ENCODE measurements at regions of chr17 and their contacts with region 1.

Region 1: GRCh38 chr17:42312285-42313130 is 24.2 kb downstream of the STAT5A start:
- DNase-seq: peak; percentile 62 to 81 (median 74)
- ATAC-seq: peak; percentile 82
- H3K4me3 ChIP-seq: peak overlapping the region; percentile 24
- H3K4me3 Mint-ChIP-seq: peak overlapping the region; percentile 54 to 82 (median 72)
- H3K27ac ChIP-seq: peak overlapping the region; percentile 69
- H3K27ac Mint-ChIP-seq: peak overlapping the region; percentile 62 to 94 (median 85)
- H3K4me1 ChIP-seq: peaks cover 13 to 67% of the 10 kb centered on the region in 2 donors
- H3K4me1 Mint-ChIP-seq: peaks cover 49 to 94% (median 79%) of the 10 kb centered on the region in 7 donors
- H3K27me3 ChIP-seq: no peaks in the 10 kb centered on the region
- H3K27me3 Mint-ChIP-seq: no peaks in the 10 kb centered on the region

Region 2: GRCh38 chr17:41930009-41930832 is 382.3 kb before region 1 on chr17 and contains the start of gene ODAD4:
- CTCF ChIA-PET with region 1: no interaction called
- POLR2A ChIA-PET with region 1: no interaction called
- intact Hi-C with region 1: no loop called
- DNase-seq: peak; percentile 87 to 98 (median 97)
- ATAC-seq: peak; percentile 98
- H3K4me3 ChIP-seq: peak within 1 kb of the TSS; percentile 79
- H3K4me3 Mint-ChIP-seq: peak within 1 kb of the TSS; percentile 93 to 100 (median 96)
- H3K27ac ChIP-seq: peak within 1 kb of the TSS; percentile 84
- H3K27ac Mint-ChIP-seq: peak within 1 kb of the TSS; percentile 90 to 100 (median 96)
- H3K4me1 ChIP-seq: peaks cover 9 to 11% of the 10 kb centered on the region in 2 donors
- H3K4me1 Mint-ChIP-seq: peaks cover 18 to 52% (median 24%) of the 10 kb centered on the region in 7 donors
- H3K27me3 ChIP-seq: no peaks in the 10 kb centered on the region
- H3K27me3 Mint-ChIP-seq: no peaks in the 10 kb centered on the region
- total RNA-seq, gene ODAD4: 0.16 to 4.1 (median 1.6) TPM in 4 of 5 experiments, not detected in the other

Region 3: GRCh38 chr17:42248351-42249179 is 63.9 kb before region 1 on chr17:
- CTCF ChIA-PET with region 1: interaction called, 4 read pairs
- POLR2A ChIA-PET with region 1: interaction called, 38 read pairs
- intact Hi-C with region 1: loop called in 1 of 2 experiments (anchors 2 kb)
- DNase-seq: peak; percentile 47 to 95 (median 90)
- ATAC-seq: peak; percentile 93
- H3K4me3 ChIP-seq: peak overlapping the region; percentile 66
- H3K4me3 Mint-ChIP-seq: peak overlapping the region; percentile 83 to 99 (median 90)
- H3K27ac ChIP-seq: peak overlapping the region; percentile 97
- H3K27ac Mint-ChIP-seq: peak overlapping the region; percentile 97 to 99 (median 99)
- H3K4me1 ChIP-seq: peaks cover 43 to 52% of the 10 kb centered on the region in 2 donors
- H3K4me1 Mint-ChIP-seq: peaks cover 50 to 83% (median 74%) of the 10 kb centered on the region in 7 donors
- H3K27me3 ChIP-seq: no peaks in the 10 kb centered on the region
- H3K27me3 Mint-ChIP-seq: no peaks in the 10 kb centered on the region

Region 4: DNA sequence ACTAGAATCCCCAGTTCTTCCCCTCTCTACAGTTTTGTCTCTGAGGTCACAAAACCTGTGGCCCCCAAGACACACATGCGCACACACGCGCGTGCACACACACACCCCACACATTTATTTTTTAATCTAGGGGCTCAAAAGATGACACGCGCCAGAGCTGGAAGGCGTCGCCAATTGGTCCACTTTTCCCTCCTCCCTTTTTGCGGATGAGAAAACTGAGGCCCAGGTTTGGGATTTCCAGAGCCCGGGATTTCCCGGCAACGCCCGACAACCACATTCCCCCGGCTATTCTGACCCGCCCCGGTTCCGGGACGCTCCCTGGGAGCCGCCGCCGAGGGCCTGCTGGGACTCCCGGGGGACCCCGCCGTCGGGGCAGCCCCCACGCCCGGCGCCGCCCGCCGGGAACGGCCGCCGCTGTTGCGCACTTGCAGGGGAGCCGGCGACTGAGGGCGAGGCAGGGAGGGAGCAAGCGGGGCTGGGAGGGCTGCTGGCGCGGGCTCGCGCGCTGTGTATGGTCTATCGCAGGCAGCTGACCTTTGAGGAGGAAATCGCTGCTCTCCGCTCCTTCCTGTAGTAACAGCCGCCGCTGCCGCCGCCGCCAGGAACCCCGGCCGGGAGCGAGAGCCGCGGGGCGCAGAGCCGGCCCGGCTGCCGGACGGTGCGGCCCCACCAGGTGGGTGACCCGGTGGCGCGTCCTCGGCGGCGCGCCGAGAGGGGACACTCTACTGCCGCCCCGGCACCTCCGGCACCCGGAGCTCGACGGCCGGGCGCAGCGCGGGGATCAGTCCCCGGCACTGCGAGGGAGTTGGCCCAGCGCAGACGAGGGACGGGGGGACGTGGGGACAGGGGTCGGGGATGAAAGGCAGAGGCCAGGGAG is 24.3 kb before region 1 on chr17 and contains the start of gene STAT5A:
- CTCF ChIA-PET with region 1: interaction called, 3 read pairs
- POLR2A ChIA-PET with region 1: interaction called, 88 read pairs
- intact Hi-C with region 1: loop called (anchors 1 to 2 kb)
- DNase-seq: peak; percentile 58 to 83 (median 79)
- ATAC-seq: peak; percentile 90
- H3K4me3 ChIP-seq: peak within 1 kb of the TSS; percentile 88
- H3K4me3 Mint-ChIP-seq: peak within 1 kb of the TSS; percentile 87 to 97 (median 93)
- H3K27ac ChIP-seq: peak within 1 kb of the TSS; percentile 93
- H3K27ac Mint-ChIP-seq: peak within 1 kb of the TSS; percentile 93 to 99 (median 96)
- H3K4me1 ChIP-seq: peaks cover 18 to 24% of the 10 kb centered on the region in 2 donors
- H3K4me1 Mint-ChIP-seq: peaks cover 27 to 65% (median 54%) of the 10 kb centered on the region in 7 donors
- H3K27me3 ChIP-seq: no peaks in the 10 kb centered on the region
- H3K27me3 Mint-ChIP-seq: no peaks in the 10 kb centered on the region
- total RNA-seq, gene STAT5A: 111 to 162 (median 150) TPM

Region 5: DNA sequence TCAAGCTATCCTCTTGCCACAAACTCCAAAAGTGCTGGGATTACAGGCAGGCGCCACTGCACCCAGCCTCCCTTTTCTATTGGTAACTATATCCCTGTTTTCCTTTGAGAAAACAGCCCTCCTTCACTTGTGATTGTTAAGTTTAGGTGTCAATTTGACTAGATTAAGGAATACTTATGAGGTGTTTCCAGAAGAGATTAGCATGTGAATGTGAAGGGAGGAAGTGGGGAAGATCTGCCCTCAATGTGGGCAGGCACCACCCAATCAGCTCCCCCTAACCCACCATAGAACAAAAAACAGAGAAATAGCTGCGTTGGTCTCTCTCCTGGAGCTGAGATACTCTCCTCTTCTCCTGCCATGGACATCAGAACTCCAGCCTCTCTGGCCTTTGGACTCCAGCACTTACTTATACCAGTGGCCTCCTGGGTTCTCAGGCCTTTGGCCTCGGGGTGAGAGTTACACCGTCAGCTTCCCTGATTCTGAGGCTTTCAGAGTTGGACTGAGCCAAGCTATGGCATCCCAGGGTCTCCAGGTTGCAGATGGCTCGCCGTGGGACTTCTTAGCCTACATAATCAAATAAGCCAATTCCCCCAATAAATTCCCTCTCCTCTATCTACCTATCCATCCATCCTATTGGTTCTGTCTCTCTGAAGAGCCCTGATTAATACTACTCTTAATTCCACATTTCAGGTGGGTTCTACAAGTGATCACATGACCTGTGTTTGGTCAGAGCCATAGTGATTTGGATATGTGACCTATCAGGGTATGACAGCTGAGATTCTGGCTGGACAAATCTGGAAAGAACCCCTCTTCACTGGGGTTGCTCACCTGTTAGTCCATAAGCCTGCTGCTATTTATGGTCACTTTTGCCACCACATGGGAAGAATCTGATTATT is 87.7 kb after region 1 on chr17:
- CTCF ChIA-PET with region 1: interaction called, 264 read pairs
- POLR2A ChIA-PET with region 1: interaction called, 10 read pairs
- intact Hi-C with region 1: no loop called
- DNase-seq: no peak
- ATAC-seq: no peak
- H3K4me3 ChIP-seq: no peak overlapping the region
- H3K4me3 Mint-ChIP-seq: peak overlapping the region in 6 of 10 donors; percentile 26 to 66 (median 38)
- H3K27ac ChIP-seq: no peak overlapping the region
- H3K27ac Mint-ChIP-seq: peak overlapping the region in 6 of 9 donors; percentile 30 to 84 (median 61)
- H3K4me1 ChIP-seq: peaks cover 0 to 10% of the 10 kb centered on the region in 2 donors
- H3K4me1 Mint-ChIP-seq: peaks cover 9 to 37% (median 13%) of the 10 kb centered on the region in 7 donors
- H3K27me3 ChIP-seq: no peaks in the 10 kb centered on the region
- H3K27me3 Mint-ChIP-seq: peaks cover 0 to 3% (median 0%) of the 10 kb centered on the region in 5 donors

Region 6: DNA sequence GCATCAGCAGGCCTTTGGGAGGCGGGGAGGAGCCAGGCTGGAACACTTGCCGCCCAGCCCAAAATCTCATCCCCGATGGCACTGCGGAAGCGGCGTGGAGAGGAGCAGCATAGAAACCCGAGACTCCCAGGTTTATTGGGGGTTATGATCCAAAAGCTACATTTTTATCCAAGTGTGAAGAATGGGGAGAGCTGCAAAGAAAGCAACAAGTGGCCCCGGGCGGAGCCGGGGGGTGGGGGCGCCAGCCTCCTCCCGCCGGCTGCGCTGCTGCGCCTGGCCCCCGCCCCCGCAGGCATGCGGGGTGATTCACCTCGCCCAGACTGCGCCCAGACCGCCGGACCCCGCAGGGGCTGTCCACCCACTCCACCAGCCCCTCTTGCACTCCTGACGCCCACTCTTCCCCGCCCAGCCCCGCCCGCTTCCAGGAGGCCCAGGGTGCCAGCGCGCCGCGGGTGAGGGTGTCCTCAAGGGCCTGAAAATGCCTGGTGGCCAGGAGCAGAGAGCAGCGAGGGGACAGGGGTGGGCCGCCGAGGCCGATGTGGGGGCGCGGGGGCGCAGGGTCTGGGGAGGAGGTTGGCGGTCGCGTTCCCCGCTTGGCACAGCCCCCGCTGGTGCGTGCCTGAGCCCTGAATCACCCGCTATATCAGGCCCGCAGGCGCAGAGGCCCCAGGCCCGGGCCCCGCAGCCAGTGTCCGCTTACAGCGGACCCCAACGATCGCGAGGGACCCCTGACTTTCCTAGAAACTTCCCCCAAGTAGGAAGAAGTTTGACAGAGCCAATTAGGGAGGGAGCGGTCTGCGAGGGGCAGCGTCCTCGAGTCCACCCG is 109.2 kb after region 1 on chr17:
- CTCF ChIA-PET with region 1: no interaction called
- POLR2A ChIA-PET with region 1: no interaction called
- intact Hi-C with region 1: no loop called
- DNase-seq: peak in 1 of 9 donors; percentile 51
- ATAC-seq: peak; percentile 18
- H3K4me3 ChIP-seq: no peak overlapping the region
- H3K4me3 Mint-ChIP-seq: peak overlapping the region; percentile 61 to 96 (median 83)
- H3K27ac ChIP-seq: no peak overlapping the region
- H3K27ac Mint-ChIP-seq: peak overlapping the region in 3 of 9 donors; percentile 28 to 64 (median 29)
- H3K4me1 ChIP-seq: peaks cover 0 to 14% of the 10 kb centered on the region in 2 donors
- H3K4me1 Mint-ChIP-seq: peaks cover 5 to 29% (median 14%) of the 10 kb centered on the region in 7 donors
- H3K27me3 ChIP-seq: peaks cover 6 to 9% of the 10 kb centered on the region in 2 donors
- H3K27me3 Mint-ChIP-seq: peaks cover 0 to 61% (median 14%) of the 10 kb centered on the region in 5 donors

Region 7: GRCh38 chr17:42459256-42459800 is 146.8 kb after region 1 on chr17:
- CTCF ChIA-PET with region 1: no interaction called
- POLR2A ChIA-PET with region 1: interaction called, 3 read pairs
- intact Hi-C with region 1: loop called in 1 of 2 experiments (anchors 2 kb)
- DNase-seq: peak in 6 of 9 donors; percentile 10 to 27 (median 16)
- ATAC-seq: no peak
- H3K4me3 ChIP-seq: peak overlapping the region; percentile 86
- H3K4me3 Mint-ChIP-seq: peak overlapping the region; percentile 88 to 97 (median 92)
- H3K27ac ChIP-seq: peak overlapping the region; percentile 66
- H3K27ac Mint-ChIP-seq: peak overlapping the region; percentile 68 to 95 (median 92)
- H3K4me1 ChIP-seq: peaks cover 36 to 39% of the 10 kb centered on the region in 2 donors
- H3K4me1 Mint-ChIP-seq: peaks cover 24 to 47% (median 40%) of the 10 kb centered on the region in 7 donors
- H3K27me3 ChIP-seq: no peaks in the 10 kb centered on the region
- H3K27me3 Mint-ChIP-seq: peaks cover 0 to 20% (median 0%) of the 10 kb centered on the region in 5 donors

Measured in naive thymus-derived CD4-positive, alpha-beta T cell (primary cell).